Posterior vena cava (tissue), 2 donors: ENCODE measurements at regions of chr1 and their contacts with region 1.

Region 1: DNA sequence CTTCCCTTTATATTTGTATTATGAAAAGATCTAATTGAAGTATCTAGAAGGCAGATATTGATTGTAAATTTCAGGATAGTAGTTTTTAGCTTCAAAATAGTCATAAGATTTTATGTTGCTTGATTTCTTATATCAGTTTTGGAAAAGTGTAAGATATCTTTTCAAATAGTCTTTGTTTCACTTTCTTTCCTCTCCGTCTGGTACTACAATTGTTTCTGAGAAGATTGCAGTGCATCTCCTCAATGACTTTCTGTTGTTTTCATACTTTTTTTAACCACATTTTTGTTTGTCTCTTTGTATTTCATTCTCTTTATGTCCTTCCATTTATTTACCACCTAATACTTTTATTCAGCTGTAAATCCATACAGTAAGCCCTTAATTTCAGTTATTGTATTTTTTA is 964.6 kb upstream of the B3GALT2 start:
- DNase-seq: no peak

Region 2: GRCh38 chr1:194104247-194104844 is 46.7 kb before region 1 on chr1:
- intact Hi-C with region 1: no loop called
- DNase-seq: peak; percentile 51

Region 3: GRCh38 chr1:195097316-195097715 is 946.3 kb after region 1 on chr1:
- intact Hi-C with region 1: loop called in 1 of 2 experiments (anchors 5 kb)
- DNase-seq: no peak